ENCODE measurements at regions of chr3 and their contacts with region 1.

Region 1: DNA sequence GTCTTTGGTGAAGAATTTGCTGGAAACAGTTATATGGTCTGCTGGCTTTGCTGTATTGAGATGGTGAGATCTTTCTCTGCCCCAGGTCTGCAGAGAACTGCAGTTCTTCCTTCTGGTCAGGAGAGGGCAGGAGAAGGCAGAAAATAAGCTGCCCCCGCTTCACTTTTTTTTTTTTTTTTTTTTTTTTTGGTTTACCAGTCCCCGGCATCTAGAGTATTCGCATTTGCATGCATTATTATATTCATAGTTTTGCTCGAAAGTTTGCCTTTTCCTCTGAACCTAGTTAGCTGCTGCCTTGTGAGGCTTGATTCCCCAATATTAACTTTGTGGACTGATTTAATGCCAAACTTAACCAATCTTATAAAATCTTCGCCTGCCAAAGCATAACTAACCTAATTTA is 10.6 kb upstream of the PARL start:
- DNase-seq: no peak
- H3K4me3 ChIP-seq: no peak overlapping the region
- H3K27ac ChIP-seq: no peak overlapping the region
- H3K4me1 ChIP-seq: no peaks in the 10 kb centered on the region
- H3K27me3 ChIP-seq: no peaks in the 10 kb centered on the region
- CTCF ChIP-seq: peak; percentile 40 to 55 (median 41)
- POLR2A ChIP-seq: no peak

Region 2: GRCh38 chr3:184017672-184018423 is 122.6 kb after region 1 on chr3 and contains the start of gene ABCC5:
- intact Hi-C with region 1: loop called (anchors 10 kb)
- DNase-seq: peak in 1 of 2 donors; percentile 90
- H3K4me3 ChIP-seq: peak within 1 kb of the TSS; percentile 93 to 97
- H3K27ac ChIP-seq: peak within 1 kb of the TSS; percentile 85
- H3K4me1 ChIP-seq: peaks cover 30% of the 10 kb centered on the region
- H3K27me3 ChIP-seq: no peaks in the 10 kb centered on the region
- CTCF ChIP-seq: peak in 1 of 3 experiments; percentile 31
- POLR2A ChIP-seq: no peak
- total RNA-seq, gene ABCC5: 67.5 TPM

Region 3: DNA sequence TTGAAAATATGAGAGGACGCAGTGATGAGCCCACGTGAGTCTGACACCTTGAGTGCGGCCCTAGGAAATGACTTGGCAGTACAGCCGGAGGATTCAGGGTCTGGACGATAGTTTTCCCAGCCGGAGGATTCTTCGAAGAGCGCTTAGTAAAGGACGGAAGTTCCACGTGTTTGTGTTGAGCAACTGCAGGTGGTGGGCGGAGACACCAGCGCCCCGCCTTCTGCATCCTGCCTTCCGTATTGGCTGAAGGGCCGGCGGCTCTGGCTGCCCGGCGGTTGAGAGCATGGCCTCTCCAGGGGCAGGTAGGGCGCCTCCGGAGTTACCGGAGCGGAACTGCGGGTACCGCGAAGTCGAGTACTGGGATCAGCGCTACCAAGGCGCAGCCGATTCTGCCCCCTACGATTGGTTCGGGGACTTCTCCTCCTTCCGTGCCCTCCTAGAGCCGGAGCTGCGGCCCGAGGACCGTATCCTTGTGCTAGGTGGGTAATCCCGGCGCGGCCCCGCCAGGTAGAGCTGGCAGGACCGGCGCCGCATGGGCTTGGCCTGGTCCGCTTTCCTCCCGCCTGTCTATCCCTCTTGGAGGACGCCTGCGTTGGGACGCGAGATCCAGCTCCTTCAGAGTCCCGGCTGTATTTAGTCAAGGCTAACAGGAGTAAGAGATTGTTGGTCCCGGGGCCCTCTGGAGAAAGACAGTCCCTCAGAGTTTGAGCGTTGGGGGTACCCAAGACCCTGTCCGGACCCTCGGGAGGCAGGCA is 354.3 kb after region 1 on chr3 and contains the start of gene EEF1AKMT4:
- intact Hi-C with region 1: loop called (anchors 10 kb)
- DNase-seq: peak; percentile 95 to 97
- H3K4me3 ChIP-seq: peak within 1 kb of the TSS; percentile 71 to 87
- H3K27ac ChIP-seq: peak within 1 kb of the TSS; percentile 79
- H3K4me1 ChIP-seq: peaks cover 28% of the 10 kb centered on the region
- H3K27me3 ChIP-seq: no peaks in the 10 kb centered on the region
- CTCF ChIP-seq: peak in 1 of 3 experiments; percentile 13
- POLR2A ChIP-seq: no peak
- total RNA-seq, gene EEF1AKMT4: 5.6 TPM

Region 4: DNA sequence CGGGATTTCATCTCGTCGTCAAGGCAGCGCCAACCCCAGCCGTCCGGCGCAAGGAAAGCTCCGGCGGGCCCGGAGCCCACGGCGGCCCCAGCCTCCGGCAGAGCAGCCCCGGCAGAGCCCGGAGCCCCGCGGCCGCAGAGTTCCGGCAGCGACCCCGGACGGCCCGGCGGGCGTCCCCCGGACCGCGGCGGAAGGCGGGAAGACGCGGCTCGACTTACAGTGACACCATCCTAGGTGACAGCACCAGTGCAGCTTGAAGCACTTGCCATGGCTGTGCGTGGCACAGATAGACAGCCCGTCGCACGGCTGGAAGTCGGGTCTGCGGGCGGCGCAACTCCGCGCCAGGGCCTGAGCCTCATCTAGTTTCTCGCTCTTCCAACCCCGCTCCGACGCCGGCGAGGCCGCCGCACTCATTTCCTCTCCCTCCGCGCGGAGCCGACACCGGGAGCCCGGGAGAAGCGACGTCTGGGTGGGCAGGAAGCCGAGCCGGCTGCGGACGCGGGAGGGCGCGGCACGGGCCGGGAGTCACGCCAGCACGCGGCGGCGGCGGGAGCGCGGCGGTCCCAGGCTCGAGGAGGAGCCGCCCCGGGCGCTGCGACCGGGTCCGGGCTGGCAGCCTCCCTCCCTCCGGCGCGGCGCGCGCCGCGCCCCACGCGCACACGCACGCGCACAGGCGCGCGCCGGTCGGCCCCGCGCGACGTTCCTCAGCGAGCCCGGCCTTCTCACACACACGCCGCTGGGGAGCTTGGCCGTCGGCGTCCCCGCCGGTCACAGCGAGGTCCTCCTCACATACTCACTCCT is 1257.3 kb after region 1 on chr3 and contains the start of gene C3orf70:
- intact Hi-C with region 1: no loop called
- DNase-seq: no peak
- H3K4me3 ChIP-seq: peak within 1 kb of the TSS; percentile 71 to 74
- H3K27ac ChIP-seq: peak within 1 kb of the TSS; percentile 87
- H3K4me1 ChIP-seq: peaks cover 18% of the 10 kb centered on the region
- H3K27me3 ChIP-seq: no peaks in the 10 kb centered on the region
- CTCF ChIP-seq: no peak
- POLR2A ChIP-seq: no peak
- total RNA-seq, gene C3orf70: 5.6 TPM